ENCODE measurements at regions of chr1 and their contacts with region 1.

Region 1: DNA sequence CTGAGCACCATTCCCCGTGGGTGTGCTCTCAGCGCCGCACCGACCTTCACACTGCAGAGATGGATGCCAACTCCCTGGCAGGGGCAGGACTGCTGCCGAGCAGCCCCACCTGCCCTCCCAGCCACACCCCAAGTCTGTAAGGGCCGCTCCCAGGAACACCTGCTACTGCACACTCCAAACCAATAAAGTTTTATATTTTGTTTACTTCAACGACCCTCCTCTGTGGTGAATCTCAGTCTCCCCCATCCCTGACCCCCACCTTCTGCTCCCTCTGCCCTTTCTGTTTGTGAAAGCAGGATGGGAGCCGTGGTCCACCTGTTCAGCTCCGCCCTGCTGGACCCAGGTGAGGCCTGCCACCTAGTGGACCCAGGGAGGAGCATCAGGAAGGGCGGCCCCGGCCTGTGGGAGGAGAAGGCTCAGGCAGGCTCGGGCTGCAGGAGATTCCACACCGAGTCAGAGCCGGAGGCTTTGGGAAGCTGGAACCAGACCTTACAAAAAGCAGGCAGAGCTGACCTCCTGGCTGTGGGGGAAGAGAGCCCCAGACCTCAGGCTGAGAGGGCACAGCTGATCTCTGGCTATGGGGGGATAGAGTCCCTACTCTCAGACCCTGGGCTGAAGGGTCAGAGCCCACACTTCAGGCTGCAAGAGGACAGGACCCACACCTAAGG is 982 bp upstream of the TMEM82 start:
- DNase-seq: no peak
- ATAC-seq: peak; percentile 97
- H3K4me3 ChIP-seq: no peak overlapping the region
- H3K27ac ChIP-seq: no peak overlapping the region
- H3K4me1 ChIP-seq: 0 out of 2 replicates have a peak, but pooled peaks cover under 1% of the 10 kb centered on the region
- H3K27me3 ChIP-seq: no peaks in the 10 kb centered on the region
- CTCF ChIP-seq: peak; percentile 90 to 98 (median 97)
- EP300 ChIP-seq: no peak
- POLR2A ChIP-seq: no peak
- RAD21 ChIP-seq: peak; percentile 99

Region 2: DNA sequence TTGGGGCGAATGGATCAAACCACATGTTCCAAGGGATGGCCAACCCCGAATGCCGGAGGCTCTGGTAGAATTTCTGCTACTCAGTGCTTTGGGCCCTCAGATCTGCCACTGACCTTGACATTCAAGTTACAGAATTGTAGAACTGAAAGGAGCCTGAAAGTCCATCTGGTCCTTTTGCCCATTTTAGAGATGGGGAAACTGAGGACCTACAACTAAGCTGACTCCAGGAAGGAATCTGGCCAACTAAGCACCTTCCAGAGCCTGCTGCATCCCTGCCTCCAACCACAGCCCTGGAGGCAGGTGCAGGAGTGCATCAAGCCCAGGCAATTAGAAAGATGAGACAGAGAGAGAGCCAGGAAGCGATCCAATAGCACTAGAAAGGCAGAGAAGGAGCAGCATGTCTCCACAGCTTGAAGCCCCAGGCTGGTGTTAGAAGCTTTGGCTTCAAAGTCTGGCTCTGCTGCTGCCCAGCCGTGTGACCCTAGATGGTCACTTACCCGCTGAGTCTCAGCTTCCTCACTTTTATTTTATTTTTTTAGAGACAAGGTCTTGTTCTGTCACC is 304.4 kb before region 1 on chr1:
- CTCF ChIA-PET with region 1: no interaction called
- POLR2A ChIA-PET with region 1: no interaction called
- RAD21 ChIA-PET with region 1: no interaction called
- SMC1A ChIA-PET with region 1: no interaction called
- in situ Hi-C with region 1: no loop called
- intact Hi-C with region 1: loop called (anchors 5 kb)
- DNase-seq: no peak
- ATAC-seq: no peak
- H3K4me3 ChIP-seq: no peak overlapping the region
- H3K27ac ChIP-seq: no peak overlapping the region
- H3K4me1 ChIP-seq: no peaks in the 10 kb centered on the region
- H3K27me3 ChIP-seq: no peaks in the 10 kb centered on the region
- CTCF ChIP-seq: no peak
- EP300 ChIP-seq: no peak
- POLR2A ChIP-seq: no peak
- RAD21 ChIP-seq: no peak

Region 3: DNA sequence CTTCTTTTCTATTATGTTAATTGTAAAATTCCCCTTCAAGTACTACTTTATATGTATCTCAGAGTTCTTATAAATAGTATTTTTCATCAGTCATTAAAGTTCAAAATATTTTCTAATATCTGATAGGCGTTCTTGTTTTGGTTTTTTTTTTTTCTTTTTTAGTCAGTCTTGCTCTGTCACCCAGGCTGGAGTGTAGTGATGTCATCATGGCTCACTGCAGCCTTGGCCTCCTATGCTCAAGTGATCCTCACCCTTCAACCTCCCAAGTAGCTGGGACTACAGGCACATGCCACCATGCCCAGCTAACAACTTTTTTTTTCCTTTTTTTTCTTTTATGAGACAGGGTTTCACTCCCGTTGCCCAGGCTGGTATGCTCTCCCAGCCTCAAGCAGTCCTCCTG is 183.7 kb before region 1 on chr1:
- CTCF ChIA-PET with region 1: no interaction called
- POLR2A ChIA-PET with region 1: no interaction called
- RAD21 ChIA-PET with region 1: no interaction called
- SMC1A ChIA-PET with region 1: no interaction called
- in situ Hi-C with region 1: no loop called
- intact Hi-C with region 1: no loop called
- DNase-seq: no peak
- ATAC-seq: no peak
- H3K4me3 ChIP-seq: no peak overlapping the region
- H3K27ac ChIP-seq: no peak overlapping the region
- H3K4me1 ChIP-seq: no peaks in the 10 kb centered on the region
- H3K27me3 ChIP-seq: no peaks in the 10 kb centered on the region
- CTCF ChIP-seq: no peak
- EP300 ChIP-seq: no peak
- POLR2A ChIP-seq: no peak
- RAD21 ChIP-seq: no peak

Region 4: DNA sequence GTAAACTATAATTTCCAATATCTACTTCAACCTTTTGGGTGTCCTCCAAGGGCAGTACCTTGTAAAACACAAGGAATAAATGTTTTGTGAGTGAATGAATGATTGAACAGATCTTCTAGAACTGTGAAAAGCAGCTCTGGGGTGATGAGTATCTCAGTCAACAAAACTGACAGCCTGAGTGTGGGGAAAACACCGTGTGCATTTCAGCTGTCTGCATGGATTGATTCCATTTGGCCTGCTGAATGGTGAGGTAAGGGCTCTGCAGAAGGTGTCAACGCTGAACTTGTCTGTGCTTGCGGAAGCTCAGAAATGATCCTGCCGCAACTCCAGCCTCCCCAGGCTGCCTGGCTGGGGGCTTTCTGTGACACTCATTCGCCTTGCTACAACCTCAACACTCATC is 149.0 kb before region 1 on chr1:
- CTCF ChIA-PET with region 1: interaction called, 11 read pairs
- POLR2A ChIA-PET with region 1: interaction called, 5 read pairs
- RAD21 ChIA-PET with region 1: interaction called, 8 read pairs
- SMC1A ChIA-PET with region 1: interaction called, 4 read pairs
- in situ Hi-C with region 1: no loop called
- intact Hi-C with region 1: loop called (anchors 2 kb)
- DNase-seq: no peak
- ATAC-seq: no peak
- H3K4me3 ChIP-seq: no peak overlapping the region
- H3K27ac ChIP-seq: no peak overlapping the region
- H3K4me1 ChIP-seq: no peaks in the 10 kb centered on the region
- H3K27me3 ChIP-seq: no peaks in the 10 kb centered on the region
- CTCF ChIP-seq: no peak
- EP300 ChIP-seq: no peak
- POLR2A ChIP-seq: no peak
- RAD21 ChIP-seq: no peak

Region 5: GRCh38 chr1:15680111-15680510 is 61.2 kb before region 1 on chr1:
- CTCF ChIA-PET with region 1: no interaction called
- POLR2A ChIA-PET with region 1: no interaction called
- RAD21 ChIA-PET with region 1: no interaction called
- SMC1A ChIA-PET with region 1: no interaction called
- in situ Hi-C with region 1: no loop called
- intact Hi-C with region 1: no loop called
- DNase-seq: no peak
- ATAC-seq: no peak
- H3K4me3 ChIP-seq: no peak overlapping the region
- H3K27ac ChIP-seq: no peak overlapping the region
- H3K4me1 ChIP-seq: peaks cover 6% of the 10 kb centered on the region
- H3K27me3 ChIP-seq: no peaks in the 10 kb centered on the region
- CTCF ChIP-seq: no peak
- EP300 ChIP-seq: no peak
- POLR2A ChIP-seq: no peak
- RAD21 ChIP-seq: no peak

Measured in GM12878 (cell line).